PC-9 (cell line): ENCODE measurements at regions of chr6 and their contacts with region 1.

Region 1: GRCh38 chr6:143397229-143398222 is 53.0 kb downstream of the ADAT2 start:
- DNase-seq: peak; percentile 91 to 98
- H3K4me3 ChIP-seq: no peak overlapping the region
- H3K27ac ChIP-seq: peak overlapping the region; percentile 90
- H3K4me1 ChIP-seq: peaks cover 70% of the 10 kb centered on the region
- H3K27me3 ChIP-seq: no peaks in the 10 kb centered on the region
- CTCF ChIP-seq: no peak

Region 2: DNA sequence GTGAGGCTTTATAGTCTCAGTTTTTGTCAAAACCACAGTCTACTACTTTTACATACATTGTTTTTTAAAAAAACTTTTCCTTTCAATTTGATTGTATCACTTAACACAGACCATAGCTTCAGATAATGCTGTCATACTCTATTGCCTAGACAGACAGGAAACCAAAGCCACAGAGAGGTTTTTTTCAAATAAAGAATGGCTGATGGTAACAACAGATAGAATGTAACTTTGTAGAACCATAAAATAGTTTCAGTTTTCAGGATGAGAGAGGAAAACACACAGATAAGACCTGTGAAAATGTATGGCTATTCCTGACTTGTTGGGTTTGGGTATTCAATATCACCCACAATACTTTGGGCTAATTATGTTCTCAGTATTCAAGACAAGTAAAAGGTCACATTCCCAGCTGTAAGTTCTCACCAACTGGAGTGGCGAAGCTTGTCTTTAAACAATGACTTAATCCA is 1001.7 kb before region 1 on chr6:
- CTCF ChIA-PET with region 1: no interaction called
- POLR2A ChIA-PET with region 1: interaction called, 10 read pairs
- intact Hi-C with region 1: no loop called
- DNase-seq: no peak
- H3K4me3 ChIP-seq: no peak overlapping the region
- H3K27ac ChIP-seq: no peak overlapping the region
- H3K4me1 ChIP-seq: no peaks in the 10 kb centered on the region
- H3K27me3 ChIP-seq: no peaks in the 10 kb centered on the region
- CTCF ChIP-seq: no peak

Region 3: DNA sequence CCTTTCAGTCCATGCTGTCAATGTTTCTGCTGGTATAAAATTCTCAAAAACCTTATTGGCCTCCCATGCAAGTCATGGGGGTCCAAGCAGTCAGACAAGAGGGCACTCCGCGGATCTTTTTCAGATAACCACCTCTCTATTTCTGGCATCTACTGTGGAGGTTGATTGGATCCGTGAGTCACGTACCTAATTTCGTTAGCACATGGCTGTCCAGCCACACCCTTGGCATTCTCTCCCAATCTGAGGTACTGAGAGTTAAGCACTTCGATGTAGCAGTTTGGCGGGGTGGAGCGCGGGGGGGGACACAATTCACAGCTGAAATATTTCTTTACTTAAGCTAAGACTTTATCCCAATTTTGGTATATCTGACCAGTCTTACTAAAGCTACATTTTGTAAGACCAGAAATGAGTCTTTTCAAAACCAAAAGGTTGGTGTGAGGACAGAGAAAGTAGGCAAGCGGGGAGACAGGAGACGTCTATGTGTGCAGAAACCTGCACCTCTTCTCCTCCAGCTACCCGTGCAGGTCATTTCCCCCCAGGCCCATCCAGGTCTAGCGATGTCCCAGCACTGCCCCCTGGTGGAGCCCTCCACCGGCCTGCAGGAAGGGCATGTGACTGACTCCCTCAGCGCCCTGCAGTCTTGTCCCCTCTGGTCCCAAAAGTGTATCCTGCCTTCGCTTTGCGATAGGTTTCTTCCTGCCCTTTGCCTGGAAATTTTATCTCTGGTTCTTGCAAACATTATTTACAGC is 60.2 kb before region 1 on chr6:
- CTCF ChIA-PET with region 1: interaction called, 5 read pairs
- POLR2A ChIA-PET with region 1: interaction called, 10 read pairs
- intact Hi-C with region 1: loop called (anchors 1 kb)
- DNase-seq: peak in 1 of 2 experiments; percentile 26
- H3K4me3 ChIP-seq: no peak overlapping the region
- H3K27ac ChIP-seq: peak overlapping the region; percentile 87
- H3K4me1 ChIP-seq: peaks cover 29% of the 10 kb centered on the region
- H3K27me3 ChIP-seq: no peaks in the 10 kb centered on the region
- CTCF ChIP-seq: 0 out of 2 replicates have a peak, but pooled peaks have one; percentile 36